GM10248 (cell line): ENCODE measurements at regions of chr16 and their contacts with region 1.

Region 1: GRCh38 chr16:65671-66137 is 6.7 kb downstream of the RHBDF1 start:
- DNase-seq: peak; percentile 89
- CTCF ChIP-seq: peak; percentile 97

Region 2: DNA sequence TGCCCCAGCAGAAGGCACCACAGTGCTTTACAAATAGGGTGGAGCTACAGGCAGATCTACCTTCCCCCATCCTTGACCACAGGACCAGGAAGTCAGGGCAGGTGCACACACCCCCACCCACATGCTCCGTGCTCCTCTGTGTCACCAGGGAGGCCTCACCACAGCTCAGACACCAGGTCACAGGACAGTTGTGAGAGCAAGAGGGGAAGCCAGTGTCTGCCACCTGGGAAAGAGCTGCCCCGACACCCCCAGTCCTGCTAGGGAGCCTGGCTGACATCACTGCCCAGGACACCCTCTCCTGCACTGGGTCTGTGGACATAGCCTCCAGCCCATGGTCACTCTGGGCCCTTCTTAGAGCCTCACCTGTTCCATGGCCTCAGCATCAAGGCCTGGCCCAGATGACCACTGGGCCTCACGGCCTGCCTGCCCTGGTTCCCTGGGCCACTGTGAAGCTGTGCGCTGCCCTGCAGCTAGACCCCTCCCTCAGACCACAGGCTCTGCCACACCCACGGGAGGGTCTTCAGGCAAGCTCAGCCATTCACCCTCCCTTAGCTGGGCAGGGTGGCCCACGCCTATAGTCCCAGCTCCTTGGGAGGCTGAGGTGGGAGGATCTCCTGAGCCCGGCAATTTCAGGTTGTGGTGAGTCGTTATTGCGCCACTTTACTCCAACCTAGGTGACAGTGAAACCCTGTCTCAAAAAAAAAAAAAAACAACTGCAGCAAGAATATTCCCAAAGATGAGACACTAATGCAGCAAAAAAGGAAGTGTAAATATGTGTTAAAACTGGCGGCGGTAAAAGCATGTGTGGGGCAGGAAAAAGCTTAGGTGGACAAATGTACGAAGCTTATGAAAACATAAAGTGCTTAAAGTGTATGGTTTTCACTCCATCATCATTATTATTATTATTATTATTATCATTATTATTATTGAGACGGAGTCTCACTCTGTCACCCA is 26.5 kb before region 1 on chr16:
- CTCF ChIA-PET with region 1: interaction called, 11 read pairs
- POLR2A ChIA-PET with region 1: no interaction called
- DNase-seq: peak; percentile 89
- CTCF ChIP-seq: no peak

Region 3: GRCh38 chr16:77807-78443 is 12.2 kb after region 1 on chr16 and contains the start of gene MPG:
- CTCF ChIA-PET with region 1: interaction called, 701 read pairs
- POLR2A ChIA-PET with region 1: no interaction called
- DNase-seq: peak; percentile 98
- CTCF ChIP-seq: no peak

Region 4: GRCh38 chr16:117379-118365 is 52.0 kb after region 1 on chr16:
- CTCF ChIA-PET with region 1: interaction called, 13 read pairs
- POLR2A ChIA-PET with region 1: no interaction called
- DNase-seq: peak; percentile 67
- CTCF ChIP-seq: peak; percentile 58

Region 5: GRCh38 chr16:361872-362701 is 296.4 kb after region 1 on chr16:
- CTCF ChIA-PET with region 1: interaction called, 14 read pairs
- POLR2A ChIA-PET with region 1: no interaction called
- DNase-seq: peak; percentile 89
- CTCF ChIP-seq: peak; percentile 83